HepG2 (cell line): ENCODE measurements at regions of chr4 and their contacts with region 1.

Region 1: DNA sequence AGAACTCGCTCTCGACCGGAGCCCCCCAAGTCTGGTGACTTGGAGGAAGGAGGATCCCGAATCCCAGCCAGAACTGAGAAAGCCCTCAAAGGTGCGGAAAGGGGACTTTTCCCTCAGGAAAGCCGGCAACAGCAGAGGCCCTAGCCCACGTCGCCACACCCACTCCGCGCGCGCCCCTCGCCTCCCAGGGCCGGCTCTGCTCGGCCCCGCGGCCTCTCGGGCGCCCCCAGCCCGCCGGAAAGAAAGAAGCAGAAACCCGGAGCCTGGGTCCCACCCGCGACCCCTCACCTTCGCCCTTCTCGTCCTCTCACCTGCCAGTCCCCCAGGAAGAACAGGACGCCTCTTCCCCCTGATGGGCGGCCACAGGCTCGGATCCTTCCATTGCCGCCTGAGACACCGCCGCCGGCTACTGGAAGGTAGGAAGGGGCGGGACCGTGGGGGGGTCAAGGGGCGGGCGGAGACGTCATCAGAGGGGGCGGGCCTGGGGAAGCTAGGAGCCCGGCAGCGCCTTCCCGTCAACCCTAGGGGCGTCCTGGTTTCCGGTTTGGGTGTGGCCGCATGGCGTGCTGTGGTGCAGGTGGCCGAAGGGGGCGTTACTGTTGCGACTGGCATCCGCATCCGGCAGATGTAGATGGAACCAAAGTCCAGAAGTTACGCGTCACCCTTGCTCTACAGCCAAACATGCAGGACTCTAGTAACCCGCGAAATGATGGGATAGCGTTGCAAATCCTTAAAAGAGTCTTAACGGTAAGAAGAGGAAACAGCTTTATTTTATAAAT is at the start of gene UBA6:
- DNase-seq: peak; percentile 96
- ATAC-seq: peak; percentile 97
- H3K4me3 ChIP-seq: peak within 1 kb of the TSS; percentile 87 to 89 (median 88)
- H3K27ac ChIP-seq: peak within 1 kb of the TSS; percentile 84
- H3K4me1 ChIP-seq: peaks cover 61% of the 10 kb centered on the region
- H3K27me3 ChIP-seq: no peaks in the 10 kb centered on the region
- CTCF ChIP-seq: peak; percentile 50
- EP300 ChIP-seq: peak in 1 of 2 experiments; percentile 40; a peak in 1 of 4 replicates
- POLR2A ChIP-seq: peak; percentile 86 to 89
- RAD21 ChIP-seq: peak; percentile 18; the same call in 1 of the 2 replicates
- total RNA-seq, gene UBA6: 75.4 and 153 TPM in 2 replicates

Region 2: GRCh38 chr4:67615119-67615518 is 85.8 kb before region 1 on chr4:
- CTCF ChIA-PET with region 1: no interaction called
- POLR2A ChIA-PET with region 1: no interaction called
- in situ Hi-C with region 1: no loop called
- intact Hi-C with region 1: loop called (anchors 5 kb)
- DNase-seq: no peak
- ATAC-seq: no peak
- H3K4me3 ChIP-seq: no peak overlapping the region
- H3K27ac ChIP-seq: no peak overlapping the region
- H3K4me1 ChIP-seq: no peaks in the 10 kb centered on the region
- H3K27me3 ChIP-seq: no peaks in the 10 kb centered on the region
- CTCF ChIP-seq: no peak
- EP300 ChIP-seq: no peak
- POLR2A ChIP-seq: no peak
- RAD21 ChIP-seq: no peak

Region 3: DNA sequence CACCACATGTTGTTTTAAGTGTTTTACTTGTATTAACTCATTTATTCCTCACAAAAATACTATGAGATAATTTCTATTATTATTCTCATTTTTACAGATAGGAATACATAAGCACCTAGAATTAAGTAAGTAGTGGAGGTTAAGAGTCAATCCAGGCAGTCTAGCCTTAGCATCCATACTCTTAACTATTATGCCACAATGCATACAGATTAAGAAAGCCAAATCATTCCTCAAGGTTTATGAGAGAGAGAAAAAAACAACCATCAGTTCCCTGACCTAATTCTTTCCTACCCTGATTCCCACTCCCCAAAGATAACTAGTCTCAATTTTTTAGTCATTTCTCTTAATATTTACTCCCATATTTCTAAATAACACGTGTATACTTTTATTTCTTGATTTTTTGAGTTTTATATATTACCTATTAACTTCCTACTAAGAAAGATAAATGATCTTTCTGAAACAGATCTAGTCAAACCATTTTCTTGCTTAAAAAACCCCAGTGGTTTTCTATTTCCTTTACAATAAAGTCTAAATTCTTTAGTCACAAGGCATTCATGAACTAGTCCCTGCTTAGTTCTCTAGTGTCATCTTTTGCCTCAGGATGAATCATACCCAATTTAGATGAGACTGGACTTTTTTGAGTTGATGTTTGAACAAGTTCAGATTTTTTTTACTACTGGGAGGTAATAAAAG is 15.9 kb before region 1 on chr4:
- CTCF ChIA-PET with region 1: no interaction called
- POLR2A ChIA-PET with region 1: no interaction called
- in situ Hi-C with region 1: no loop called
- intact Hi-C with region 1: loop called (anchors 2 kb)
- DNase-seq: no peak
- ATAC-seq: no peak
- H3K4me3 ChIP-seq: no peak overlapping the region
- H3K27ac ChIP-seq: no peak overlapping the region
- H3K4me1 ChIP-seq: peaks cover 10% of the 10 kb centered on the region
- H3K27me3 ChIP-seq: no peaks in the 10 kb centered on the region
- CTCF ChIP-seq: no peak
- EP300 ChIP-seq: no peak
- POLR2A ChIP-seq: no peak
- RAD21 ChIP-seq: no peak